Dendritic cell treated with granulocyte-macrophage colony-stimulating factor and Interleukin-4, amounts not matched to agents 40 ng/mL and 50 ng/mL, for 4 days (primary cell): ENCODE measurements at regions of chr10 and their contacts with region 1.

Region 1: DNA sequence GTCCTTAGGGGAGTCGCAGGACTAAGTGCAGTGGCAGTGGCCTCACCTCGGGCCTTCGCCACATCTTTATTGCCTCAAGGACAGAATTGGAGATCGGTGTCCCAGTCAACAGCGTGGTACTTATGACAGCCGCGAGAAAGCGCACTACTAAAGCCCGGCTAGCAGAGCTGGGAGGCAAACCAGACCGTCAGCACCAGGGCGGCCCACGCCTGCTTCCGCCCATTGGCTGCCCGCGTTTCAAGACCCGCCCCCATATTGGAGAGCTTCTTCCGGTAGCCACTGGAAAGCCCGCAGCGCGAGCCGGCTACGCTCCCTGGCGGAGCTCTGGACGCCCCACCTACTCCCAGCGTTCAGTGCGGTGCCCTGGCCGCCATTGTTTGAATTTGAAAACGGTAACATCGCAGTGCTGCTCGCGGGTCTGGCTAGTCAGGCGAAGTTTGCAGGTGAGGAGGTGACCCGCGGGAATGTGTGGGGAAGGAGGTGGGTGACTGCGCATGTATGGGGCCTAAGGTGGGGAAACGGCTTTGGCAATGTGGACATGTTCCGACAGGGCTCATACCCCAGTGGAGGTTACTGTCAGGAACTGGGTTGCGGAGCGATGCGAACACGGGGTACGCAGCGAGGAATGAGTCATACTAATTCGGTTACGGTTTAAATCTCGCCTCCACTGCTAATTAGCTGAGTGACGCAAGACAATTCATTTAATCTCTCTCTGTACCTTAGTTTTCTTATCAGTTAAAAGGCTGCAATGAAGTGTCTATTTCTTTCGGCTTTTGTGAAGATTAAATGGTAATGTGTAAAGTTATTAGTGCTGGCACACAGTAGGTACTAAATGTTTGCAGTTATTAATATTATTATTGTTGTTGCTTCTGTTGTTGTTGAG is at the start of gene KIF20B:
- H3K4me3 Mint-ChIP-seq: peak within 1 kb of the TSS; percentile 90
- H3K27ac Mint-ChIP-seq: peak within 1 kb of the TSS; percentile 95
- H3K4me1 Mint-ChIP-seq: peaks cover 28% of the 10 kb centered on the region
- H3K27me3 Mint-ChIP-seq: no peaks in the 10 kb centered on the region

Region 2: GRCh38 chr10:89062861-89063260 is 638.6 kb before region 1 on chr10:
- intact Hi-C with region 1: no loop called
- H3K4me3 Mint-ChIP-seq: no peak overlapping the region
- H3K27ac Mint-ChIP-seq: no peak overlapping the region
- H3K4me1 Mint-ChIP-seq: no peaks in the 10 kb centered on the region
- H3K27me3 Mint-ChIP-seq: peaks cover 2% of the 10 kb centered on the region

Region 3: DNA sequence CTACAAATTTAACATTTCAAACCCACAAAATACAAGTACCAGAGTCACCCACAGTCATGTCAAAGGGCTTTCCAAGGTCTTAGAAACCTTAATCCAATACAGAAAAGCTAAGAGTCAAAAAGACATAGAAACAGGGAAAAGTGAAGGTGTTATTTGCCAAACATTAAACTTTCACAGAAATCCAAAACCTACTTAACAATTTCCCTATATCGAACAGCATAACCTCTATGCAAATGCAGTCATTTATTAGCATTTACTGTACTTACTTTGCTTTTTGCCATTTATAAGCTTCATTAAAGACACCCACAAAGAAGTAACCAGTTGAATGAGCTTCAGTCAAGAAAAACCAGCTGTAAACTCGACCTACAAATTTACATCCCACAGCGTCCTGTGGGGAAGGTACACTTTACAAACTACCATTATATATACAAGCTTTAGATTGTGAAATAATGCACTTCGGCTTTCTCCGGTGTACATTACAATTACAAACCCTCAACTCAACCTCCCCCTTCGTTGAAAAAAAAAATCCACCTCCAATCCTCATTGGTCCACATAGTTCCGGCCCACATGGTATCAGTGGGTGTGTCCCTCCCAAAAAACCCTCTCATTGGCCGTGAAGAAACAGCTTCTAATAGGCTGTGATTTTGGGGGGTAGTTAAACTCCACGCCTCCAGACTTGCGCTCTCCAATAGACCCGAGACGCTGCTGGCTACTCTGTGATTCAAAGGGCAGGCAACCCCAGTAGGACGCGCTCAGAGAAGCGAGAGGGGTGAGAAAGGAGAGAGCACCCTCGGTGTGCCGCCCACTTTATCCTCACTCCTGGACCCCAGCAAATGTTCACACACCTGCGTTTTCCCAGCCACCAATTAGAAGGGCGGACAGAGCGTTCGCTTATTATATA is 57.8 kb before region 1 on chr10:
- intact Hi-C with region 1: loop called (anchors 2 kb)
- H3K4me3 Mint-ChIP-seq: no peak overlapping the region
- H3K27ac Mint-ChIP-seq: no peak overlapping the region
- H3K4me1 Mint-ChIP-seq: peaks cover 20% of the 10 kb centered on the region
- H3K27me3 Mint-ChIP-seq: peaks cover 11% of the 10 kb centered on the region

Region 4: GRCh38 chr10:89738551-89739209 is 37.2 kb after region 1 on chr10:
- intact Hi-C with region 1: loop called (anchors 5 kb)
- H3K4me3 Mint-ChIP-seq: peak overlapping the region; percentile 63
- H3K27ac Mint-ChIP-seq: peak overlapping the region; percentile 86
- H3K4me1 Mint-ChIP-seq: peaks cover 21% of the 10 kb centered on the region
- H3K27me3 Mint-ChIP-seq: no peaks in the 10 kb centered on the region

Region 5: DNA sequence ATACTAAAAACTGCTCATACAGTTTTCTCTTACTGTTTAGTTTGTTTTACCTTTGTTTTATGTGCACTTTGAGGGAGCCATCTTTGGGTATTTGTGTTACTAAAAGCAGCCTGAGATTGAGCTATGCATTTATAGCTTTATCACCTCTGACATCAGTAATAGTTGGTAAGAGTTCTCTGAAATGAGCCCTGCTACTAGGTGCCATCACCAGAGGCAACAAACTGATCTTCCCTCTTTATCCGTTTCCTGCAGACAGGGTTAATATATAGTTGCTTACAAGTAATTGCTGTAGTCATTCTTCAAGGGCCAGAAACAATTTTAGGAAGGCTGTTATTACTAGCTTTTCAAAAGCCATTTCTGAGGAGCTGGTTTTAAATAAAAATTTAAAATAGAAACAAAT is 49.0 kb after region 1 on chr10:
- intact Hi-C with region 1: no loop called
- H3K4me3 Mint-ChIP-seq: no peak overlapping the region
- H3K27ac Mint-ChIP-seq: no peak overlapping the region
- H3K4me1 Mint-ChIP-seq: peaks cover 5% of the 10 kb centered on the region
- H3K27me3 Mint-ChIP-seq: no peaks in the 10 kb centered on the region